Endothelial cell of umbilical vein (primary cell): ENCODE measurements at regions of chr17 and their contacts with region 1.

Region 1: GRCh38 chr17:72407336-72407909 is 286.6 kb downstream of the SOX9 start:
- DNase-seq: peak; percentile 50
- H3K4me3 ChIP-seq: no peak overlapping the region
- H3K27ac ChIP-seq: no peak overlapping the region
- H3K4me1 ChIP-seq: peaks cover 5% of the 10 kb centered on the region
- H3K27me3 ChIP-seq: no peaks in the 10 kb centered on the region
- CTCF ChIP-seq: no peak
- POLR2A ChIP-seq: no peak

Region 2: GRCh38 chr17:72373910-72374741 is 33.3 kb before region 1 on chr17:
- CTCF ChIA-PET with region 1: no interaction called
- POLR2A ChIA-PET with region 1: no interaction called
- dilution Hi-C with region 1: no loop called
- intact Hi-C with region 1: no loop called
- DNase-seq: no peak
- H3K4me3 ChIP-seq: no peak overlapping the region
- H3K27ac ChIP-seq: no peak overlapping the region
- H3K4me1 ChIP-seq: no peaks in the 10 kb centered on the region
- H3K27me3 ChIP-seq: no peaks in the 10 kb centered on the region
- CTCF ChIP-seq: no peak
- POLR2A ChIP-seq: no peak

Region 3: DNA sequence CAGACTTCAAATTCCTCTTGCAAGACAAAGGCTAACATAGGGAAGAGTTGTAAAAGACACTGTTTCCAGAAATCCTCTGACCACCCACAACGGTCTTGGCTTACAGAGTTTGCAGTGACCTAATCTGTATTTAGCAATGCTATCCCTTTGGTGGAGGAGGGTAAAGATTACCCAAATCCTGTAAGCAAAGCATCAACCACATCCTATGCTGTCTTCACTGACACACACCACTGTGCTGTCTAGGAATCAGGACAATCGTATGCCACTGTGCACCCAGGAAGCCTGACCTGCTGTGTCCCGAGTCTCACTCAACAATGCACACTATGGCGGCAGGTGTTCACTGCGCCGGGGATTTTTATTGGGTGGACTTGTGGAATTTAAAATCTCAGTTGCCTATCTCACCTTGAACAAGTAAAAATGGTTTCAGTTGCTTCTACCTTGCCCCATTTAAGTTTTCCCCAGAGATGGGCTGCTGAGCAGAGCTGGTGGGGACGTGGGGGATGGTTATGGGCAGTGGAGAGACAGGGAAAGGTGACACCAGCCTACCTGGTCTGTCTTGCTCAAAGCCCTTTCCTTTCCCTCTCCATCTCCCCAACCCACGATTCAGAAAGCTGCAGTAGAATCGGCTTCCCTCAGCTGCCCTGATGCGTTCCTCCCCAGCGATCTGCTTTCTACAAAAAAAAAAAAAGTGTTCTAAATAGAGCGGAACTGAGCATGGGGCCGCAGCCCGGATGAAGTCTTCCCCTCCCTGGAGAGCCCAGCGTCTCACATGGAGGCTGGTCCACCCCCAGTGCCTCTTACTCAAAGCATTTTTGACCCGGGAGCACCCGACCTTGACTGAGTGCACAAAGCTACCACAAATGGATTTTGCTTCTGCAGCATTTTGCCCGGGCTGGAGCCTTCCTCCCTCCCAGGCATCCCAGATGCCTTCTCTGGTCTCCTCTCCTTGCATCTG is 15.1 kb before region 1 on chr17:
- CTCF ChIA-PET with region 1: interaction called, 3 read pairs
- POLR2A ChIA-PET with region 1: no interaction called
- dilution Hi-C with region 1: no loop called
- intact Hi-C with region 1: loop called (anchors 2 kb)
- DNase-seq: no peak
- H3K4me3 ChIP-seq: no peak overlapping the region
- H3K27ac ChIP-seq: no peak overlapping the region
- H3K4me1 ChIP-seq: peaks cover 19% of the 10 kb centered on the region
- H3K27me3 ChIP-seq: no peaks in the 10 kb centered on the region
- CTCF ChIP-seq: no peak
- POLR2A ChIP-seq: no peak

Region 4: DNA sequence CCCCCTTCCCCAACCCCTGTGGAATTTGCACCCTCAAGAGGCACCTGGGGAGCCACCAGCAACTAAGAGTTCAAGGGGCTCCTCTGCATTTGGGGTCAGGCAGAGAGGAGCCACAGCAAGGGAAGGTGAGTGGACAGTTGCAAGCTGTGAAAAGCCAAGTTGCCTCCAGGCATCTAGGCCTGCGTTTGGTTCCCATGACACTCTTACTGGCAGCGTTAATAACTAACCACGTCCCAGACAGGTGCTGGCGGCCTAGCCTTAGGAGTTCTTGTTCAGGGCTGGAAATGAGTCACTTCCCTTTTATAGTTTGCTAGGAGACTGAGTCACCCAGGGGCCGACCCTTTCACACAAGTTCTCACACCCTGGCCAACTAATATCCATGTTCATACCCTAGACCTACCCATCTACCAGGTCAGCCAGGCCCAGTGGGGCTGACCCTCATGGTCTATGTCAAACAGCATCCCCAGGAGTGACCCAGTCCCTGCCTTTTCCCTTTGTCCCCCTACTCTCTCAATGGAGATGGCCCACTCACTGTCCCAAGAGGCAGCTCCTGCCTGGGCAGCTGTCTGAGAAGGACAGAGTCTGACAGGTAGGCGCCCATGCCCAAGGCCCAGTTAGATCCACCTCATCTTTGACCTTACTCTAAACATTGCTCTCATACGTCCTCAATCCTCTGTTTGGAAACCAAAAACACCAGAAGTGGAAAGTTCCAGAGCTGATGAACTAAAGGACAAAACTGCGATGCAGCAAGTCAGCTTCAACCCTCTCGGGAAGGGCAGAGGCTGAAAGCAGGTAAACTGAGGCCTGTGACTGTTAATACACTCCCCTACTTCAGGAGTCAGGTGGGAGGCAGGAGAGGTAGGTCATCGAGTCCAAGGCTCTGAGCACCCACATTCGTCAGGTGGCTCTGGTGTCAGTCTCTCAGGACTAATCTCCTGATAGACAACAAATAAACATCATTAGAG is 14.0 kb after region 1 on chr17:
- CTCF ChIA-PET with region 1: interaction called, 4 read pairs
- POLR2A ChIA-PET with region 1: no interaction called
- dilution Hi-C with region 1: no loop called
- intact Hi-C with region 1: loop called (anchors 1 kb)
- DNase-seq: peak; percentile 80
- H3K4me3 ChIP-seq: no peak overlapping the region
- H3K27ac ChIP-seq: peak overlapping the region; percentile 85
- H3K4me1 ChIP-seq: peaks cover 16% of the 10 kb centered on the region
- H3K27me3 ChIP-seq: no peaks in the 10 kb centered on the region
- CTCF ChIP-seq: no peak
- POLR2A ChIP-seq: no peak